Activated CD4-positive, alpha-beta T cell treated with anti-CD3 and anti-CD28 coated beads for 36 hours (primary cell): ENCODE measurements at regions of chr15 and their contacts with region 1.

Region 1: DNA sequence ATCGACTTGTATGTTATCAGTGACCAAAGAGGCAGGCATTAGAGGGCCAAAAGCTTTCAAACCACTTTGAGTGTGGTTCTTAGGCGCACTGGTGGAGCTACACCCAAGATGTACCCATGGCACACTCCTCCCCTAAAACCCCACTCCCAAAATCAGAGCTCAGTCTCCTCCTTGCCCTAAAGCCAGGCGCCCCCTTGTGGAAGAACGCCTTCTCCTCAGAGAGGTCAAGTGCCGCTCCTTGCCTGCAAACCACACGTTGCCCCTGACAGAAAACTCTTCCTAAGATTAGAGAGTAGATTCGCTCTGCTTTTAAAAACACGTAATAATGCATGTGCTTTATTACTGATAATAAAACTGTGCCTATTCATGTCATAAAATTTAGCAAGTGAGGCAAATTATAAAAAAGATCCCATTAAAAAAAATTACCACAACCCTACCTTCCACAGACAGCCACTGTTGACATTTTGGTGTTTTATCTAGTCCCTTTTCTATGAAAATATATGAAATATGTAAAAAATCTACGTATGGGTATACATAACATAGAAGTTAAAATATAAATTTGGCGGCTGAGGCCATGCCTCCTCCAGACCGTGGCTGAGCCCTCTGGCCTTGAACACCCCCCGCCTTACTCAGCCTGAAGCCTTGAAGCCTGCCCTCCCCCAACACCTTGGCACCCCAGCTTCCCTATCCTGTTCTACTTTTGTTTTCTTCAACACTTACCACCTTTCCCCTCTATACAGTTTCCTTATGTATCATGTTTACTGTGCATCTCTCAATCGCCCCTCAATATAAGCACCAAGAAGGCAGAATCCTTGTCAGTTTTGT is 33.5 kb downstream of the BCL2L10 start:
- DNase-seq: peak; percentile 93
- ATAC-seq: peak; percentile 79
- H3K4me3 Mint-ChIP-seq: no peak overlapping the region
- H3K27ac Mint-ChIP-seq: no peak overlapping the region
- H3K4me1 Mint-ChIP-seq: peaks cover 15% of the 10 kb centered on the region
- H3K27me3 Mint-ChIP-seq: no peaks in the 10 kb centered on the region

Region 2: DNA sequence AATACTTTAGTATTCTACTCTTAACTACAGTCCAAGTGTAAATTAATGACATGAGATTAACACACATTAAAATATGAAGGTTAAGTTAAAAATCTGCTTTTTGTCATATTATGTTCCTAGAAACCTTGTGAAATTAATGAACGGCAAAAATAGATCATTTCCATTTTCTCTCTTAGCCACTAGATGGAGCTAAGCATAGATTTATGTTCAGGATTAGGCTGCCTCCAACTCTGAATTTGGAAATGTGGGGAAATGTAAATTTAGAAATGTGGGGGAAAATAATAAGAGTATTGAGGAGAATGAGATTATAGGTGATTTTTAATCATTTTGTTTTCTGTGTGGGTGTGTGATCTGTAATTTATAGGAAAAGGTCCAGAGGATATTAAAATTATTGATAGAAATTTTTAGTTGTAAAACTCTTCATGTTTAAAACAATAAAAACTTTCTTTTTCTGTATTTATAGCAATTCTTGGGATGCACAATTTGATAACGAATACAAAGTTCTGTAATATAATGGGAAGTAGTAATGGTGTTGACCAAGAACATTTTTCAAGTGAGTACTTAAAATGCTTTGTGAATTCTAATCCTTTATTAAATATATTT is 190.4 kb before region 1 on chr15:
- CTCF ChIA-PET with region 1: interaction called, 7 read pairs
- POLR2A ChIA-PET with region 1: no interaction called
- intact Hi-C with region 1: loop called in 1 of 2 experiments (anchors 2 kb)
- DNase-seq: no peak
- ATAC-seq: no peak
- H3K4me3 Mint-ChIP-seq: no peak overlapping the region
- H3K27ac Mint-ChIP-seq: no peak overlapping the region
- H3K4me1 Mint-ChIP-seq: peaks cover 7% of the 10 kb centered on the region
- H3K27me3 Mint-ChIP-seq: no peaks in the 10 kb centered on the region

Region 3: DNA sequence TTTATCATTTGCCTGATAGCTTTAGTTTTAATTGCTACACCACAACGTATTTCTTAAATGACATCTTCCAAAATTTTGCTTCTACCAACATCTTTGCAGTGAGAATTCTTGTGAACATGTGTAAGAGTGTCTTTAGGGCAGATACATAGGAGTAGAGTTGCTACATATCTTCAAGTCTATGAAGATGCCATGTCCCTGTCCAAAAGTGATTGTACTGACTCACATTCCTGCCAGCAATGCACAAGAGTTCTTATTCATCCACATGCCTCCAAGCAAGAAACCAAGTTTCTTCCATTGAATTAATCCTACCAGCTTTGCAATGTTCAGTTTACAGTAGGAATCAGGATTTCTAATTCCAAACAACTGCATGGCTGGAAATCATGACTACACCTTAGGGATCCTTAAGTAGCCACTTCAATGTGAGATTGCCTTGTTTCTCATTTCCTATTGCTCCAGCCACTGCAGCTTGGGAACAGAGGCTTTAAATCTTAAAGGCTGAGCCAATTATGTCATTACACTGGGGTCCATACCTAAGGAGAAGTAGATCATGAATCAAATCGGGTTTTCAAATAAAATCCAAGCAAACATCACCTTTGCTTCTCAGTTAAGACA is 11.0 kb before region 1 on chr15:
- CTCF ChIA-PET with region 1: interaction called, 34 read pairs
- POLR2A ChIA-PET with region 1: no interaction called
- intact Hi-C with region 1: no loop called
- DNase-seq: no peak
- ATAC-seq: no peak
- H3K4me3 Mint-ChIP-seq: no peak overlapping the region
- H3K27ac Mint-ChIP-seq: no peak overlapping the region
- H3K4me1 Mint-ChIP-seq: peaks cover 11% of the 10 kb centered on the region
- H3K27me3 Mint-ChIP-seq: no peaks in the 10 kb centered on the region

Region 4: GRCh38 chr15:52090193-52090592 is 11.1 kb after region 1 on chr15:
- CTCF ChIA-PET with region 1: interaction called, 10 read pairs
- POLR2A ChIA-PET with region 1: no interaction called
- intact Hi-C with region 1: no loop called
- DNase-seq: no peak
- ATAC-seq: no peak
- H3K4me3 Mint-ChIP-seq: no peak overlapping the region
- H3K27ac Mint-ChIP-seq: no peak overlapping the region
- H3K4me1 Mint-ChIP-seq: no peaks in the 10 kb centered on the region
- H3K27me3 Mint-ChIP-seq: peaks cover 2% of the 10 kb centered on the region

Region 5: DNA sequence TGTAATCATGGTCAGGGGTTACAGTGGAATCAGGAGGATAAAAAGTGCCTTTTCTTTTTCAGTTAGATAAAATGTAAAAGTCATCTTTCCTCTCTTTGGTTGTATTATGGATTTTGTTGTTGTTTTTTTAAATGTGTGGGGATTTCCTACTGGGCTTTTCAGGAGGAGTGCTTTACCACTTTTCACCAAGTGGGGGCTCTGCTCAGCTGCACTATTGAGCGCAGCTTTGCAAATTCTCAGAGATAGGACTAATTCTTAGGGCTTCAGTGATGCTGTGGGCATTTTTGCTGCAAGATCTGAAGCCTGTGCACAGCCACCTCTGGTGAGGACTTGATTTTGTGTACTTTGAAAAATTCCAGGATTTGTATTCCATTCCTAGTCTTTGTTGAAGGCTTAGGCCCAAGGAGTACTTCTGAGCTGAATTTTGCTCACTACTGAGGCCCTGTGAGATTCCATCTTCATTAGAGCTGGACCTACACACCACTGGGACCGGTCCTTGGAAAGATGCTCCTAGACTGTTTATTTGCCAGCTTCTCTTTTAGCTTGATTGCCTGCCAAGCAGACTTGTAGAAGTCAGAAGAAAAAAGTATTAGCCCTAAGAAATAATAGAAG is 104.6 kb after region 1 on chr15:
- CTCF ChIA-PET with region 1: no interaction called
- POLR2A ChIA-PET with region 1: no interaction called
- intact Hi-C with region 1: no loop called
- DNase-seq: peak; percentile 52
- ATAC-seq: no peak
- H3K4me3 Mint-ChIP-seq: no peak overlapping the region
- H3K27ac Mint-ChIP-seq: no peak overlapping the region
- H3K4me1 Mint-ChIP-seq: peaks cover 11% of the 10 kb centered on the region
- H3K27me3 Mint-ChIP-seq: no peaks in the 10 kb centered on the region

Region 6: DNA sequence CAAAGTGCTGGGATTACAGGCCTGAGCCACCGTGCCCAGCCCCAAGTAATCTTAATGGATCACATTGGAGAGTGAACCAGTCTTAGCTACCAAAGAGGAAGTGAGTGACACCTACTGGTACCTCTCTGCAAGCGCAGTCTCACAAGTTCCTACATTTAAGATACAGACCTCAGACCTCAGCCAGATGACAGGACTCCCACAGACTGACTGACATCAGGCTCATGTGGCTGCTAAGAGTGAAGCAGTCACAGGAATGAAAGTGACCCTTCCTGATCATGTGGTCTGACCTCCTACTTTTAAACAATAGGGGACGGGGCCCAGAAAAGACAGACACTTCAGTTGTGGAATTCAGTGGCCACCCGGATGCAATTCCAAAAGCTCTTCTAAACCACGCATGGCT is 148.4 kb after region 1 on chr15:
- CTCF ChIA-PET with region 1: interaction called, 5 read pairs
- POLR2A ChIA-PET with region 1: no interaction called
- intact Hi-C with region 1: loop called in 1 of 2 experiments (anchors 2 kb)
- DNase-seq: peak; percentile 82
- ATAC-seq: peak; percentile 95
- H3K4me3 Mint-ChIP-seq: no peak overlapping the region
- H3K27ac Mint-ChIP-seq: no peak overlapping the region
- H3K4me1 Mint-ChIP-seq: peaks cover 13% of the 10 kb centered on the region
- H3K27me3 Mint-ChIP-seq: no peaks in the 10 kb centered on the region

Region 7: DNA sequence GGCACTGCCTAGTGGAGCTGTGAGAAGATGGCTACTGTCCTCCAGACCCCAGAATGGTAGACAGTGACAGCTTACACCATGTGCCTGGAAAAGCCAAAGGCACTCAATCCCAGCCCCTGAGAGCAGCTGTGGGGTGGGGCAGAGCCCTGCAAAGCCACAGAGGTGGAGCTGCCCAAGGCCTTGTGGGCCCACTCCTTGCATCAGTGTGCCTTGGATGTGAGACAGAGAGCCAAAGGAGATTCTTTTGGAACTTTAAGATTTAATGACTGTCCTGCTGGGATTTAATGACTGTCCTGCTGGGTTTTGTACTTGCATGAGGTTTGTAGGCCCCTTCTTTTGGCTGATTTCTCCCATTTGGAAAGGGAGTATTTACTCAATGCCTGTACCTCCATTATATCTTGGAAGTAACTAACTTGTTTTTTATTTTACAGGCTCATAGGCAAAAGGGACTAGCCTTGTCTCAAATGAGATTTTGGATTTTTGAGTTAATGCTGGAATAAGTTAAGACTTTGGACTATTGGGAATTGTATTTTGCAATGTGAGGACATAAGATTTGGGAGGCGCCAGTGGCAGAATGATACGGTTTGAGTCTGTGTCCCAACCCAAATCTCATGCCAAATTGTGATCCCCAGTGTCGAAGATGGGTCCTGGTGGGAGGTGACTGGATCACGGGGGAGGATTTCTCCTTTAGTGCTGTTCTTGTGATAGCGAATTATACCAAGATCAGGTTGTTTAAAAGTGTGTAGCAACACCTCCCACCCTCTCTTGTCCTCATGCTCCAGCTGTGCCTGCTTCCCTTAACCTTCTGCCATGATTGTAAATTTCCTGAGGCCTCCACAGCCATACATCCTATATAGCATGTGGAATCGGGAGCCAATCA is 369.2 kb after region 1 on chr15:
- CTCF ChIA-PET with region 1: no interaction called
- POLR2A ChIA-PET with region 1: no interaction called
- intact Hi-C with region 1: no loop called
- DNase-seq: no peak
- ATAC-seq: no peak
- H3K4me3 Mint-ChIP-seq: no peak overlapping the region
- H3K27ac Mint-ChIP-seq: no peak overlapping the region
- H3K4me1 Mint-ChIP-seq: peaks cover 18% of the 10 kb centered on the region
- H3K27me3 Mint-ChIP-seq: no peaks in the 10 kb centered on the region

Region 8: GRCh38 chr15:52546031-52546751 is 467.1 kb after region 1 on chr15:
- CTCF ChIA-PET with region 1: no interaction called
- POLR2A ChIA-PET with region 1: interaction called, 11 read pairs
- intact Hi-C with region 1: no loop called
- DNase-seq: no peak
- ATAC-seq: peak; percentile 39
- H3K4me3 Mint-ChIP-seq: no peak overlapping the region
- H3K27ac Mint-ChIP-seq: no peak overlapping the region
- H3K4me1 Mint-ChIP-seq: peaks cover 2% of the 10 kb centered on the region
- H3K27me3 Mint-ChIP-seq: no peaks in the 10 kb centered on the region